ENCODE measurements at regions of chr16 and their contacts with region 1.

Region 1: GRCh38 chr16:24151482-24151939 is 104.6 kb upstream of the CACNG3 start:
- DNase-seq: peak; percentile 1
- H3K4me3 Mint-ChIP-seq: peak overlapping the region; percentile 2
- H3K27ac Mint-ChIP-seq: peak overlapping the region; percentile 77
- H3K4me1 Mint-ChIP-seq: peaks cover 36% of the 10 kb centered on the region
- H3K27me3 Mint-ChIP-seq: no peaks in the 10 kb centered on the region

Region 2: DNA sequence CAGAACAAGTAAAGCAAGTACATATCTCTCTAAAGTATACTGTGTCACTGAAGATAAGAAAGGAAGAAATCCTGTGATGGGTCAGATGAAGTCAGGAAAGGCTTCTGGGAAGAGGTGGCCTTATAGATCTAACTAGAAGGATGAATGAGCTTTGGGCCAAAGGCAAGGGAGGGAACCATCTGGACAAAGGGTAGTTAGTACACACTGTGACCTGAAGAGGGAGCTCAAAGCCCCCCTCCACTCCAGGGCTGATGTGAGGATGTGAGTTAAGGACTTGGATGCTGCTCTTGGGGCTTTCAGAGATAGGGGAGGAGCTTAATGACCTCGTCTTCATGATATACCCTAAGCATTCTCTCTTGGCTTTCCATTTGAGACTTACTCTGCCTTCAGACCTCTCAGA is 80.7 kb before region 1 on chr16:
- intact Hi-C with region 1: loop called (anchors 10 kb)
- DNase-seq: peak; percentile 6
- H3K4me3 Mint-ChIP-seq: no peak overlapping the region
- H3K27ac Mint-ChIP-seq: no peak overlapping the region
- H3K4me1 Mint-ChIP-seq: peaks cover 20% of the 10 kb centered on the region
- H3K27me3 Mint-ChIP-seq: no peaks in the 10 kb centered on the region

Region 3: DNA sequence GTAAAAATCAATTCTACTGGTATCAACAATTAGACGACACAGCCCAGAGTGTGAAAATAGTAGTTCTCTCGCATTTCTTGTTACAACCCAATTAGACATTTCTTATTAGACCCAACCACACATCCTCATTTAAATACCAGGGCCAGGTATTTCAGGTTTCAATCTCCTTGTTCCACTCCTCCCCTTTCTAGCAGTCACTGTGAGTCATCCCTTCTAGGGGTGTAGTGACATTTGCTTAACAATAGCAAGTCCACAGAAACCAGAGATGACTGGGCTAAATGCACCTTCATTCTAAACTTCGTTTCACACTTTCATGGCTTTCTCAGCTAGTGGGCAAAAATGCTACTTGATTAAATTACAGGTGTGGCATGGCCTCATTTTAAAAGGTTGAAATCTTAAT is 12.2 kb before region 1 on chr16:
- intact Hi-C with region 1: loop called (anchors 1 kb)
- DNase-seq: no peak
- H3K4me3 Mint-ChIP-seq: no peak overlapping the region
- H3K27ac Mint-ChIP-seq: peak overlapping the region; percentile 55
- H3K4me1 Mint-ChIP-seq: peaks cover 13% of the 10 kb centered on the region
- H3K27me3 Mint-ChIP-seq: no peaks in the 10 kb centered on the region

Region 4: GRCh38 chr16:24189941-24190340 is 38.4 kb after region 1 on chr16:
- intact Hi-C with region 1: loop called (anchors 1 kb)
- DNase-seq: no peak
- H3K4me3 Mint-ChIP-seq: no peak overlapping the region
- H3K27ac Mint-ChIP-seq: peak overlapping the region; percentile 67
- H3K4me1 Mint-ChIP-seq: peaks cover 25% of the 10 kb centered on the region
- H3K27me3 Mint-ChIP-seq: no peaks in the 10 kb centered on the region